IMR-90 (cell line): ENCODE measurements at regions of chr5 and their contacts with region 1.

Region 1: DNA sequence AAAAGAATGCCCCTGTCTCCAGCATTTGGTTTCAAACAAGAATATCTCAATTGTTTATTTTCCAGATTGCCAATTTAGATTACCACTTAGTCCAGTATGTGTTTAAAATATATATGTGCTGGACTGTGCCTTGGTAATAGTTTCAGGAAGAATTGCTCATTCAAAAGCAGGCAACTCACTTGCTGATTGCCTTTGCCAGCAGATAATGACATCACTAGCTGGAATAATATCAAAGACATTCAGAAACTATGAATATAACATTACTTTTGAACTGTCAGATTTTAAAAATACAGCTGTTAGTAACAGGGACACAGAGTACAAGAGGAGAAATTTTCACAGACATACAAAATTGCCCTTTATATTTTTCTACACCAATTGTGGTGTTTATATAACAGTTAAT is 96.0 kb upstream of the ITGA2 start:
- DNase-seq: peak; percentile 90
- ATAC-seq: peak; percentile 76
- H3K4me3 ChIP-seq: no peak overlapping the region
- H3K27ac ChIP-seq: no peak overlapping the region
- H3K4me1 ChIP-seq: peaks cover 9% of the 10 kb centered on the region
- H3K27me3 ChIP-seq: no peaks in the 10 kb centered on the region
- CTCF ChIP-seq: no peak
- POLR2A ChIP-seq: no peak
- RAD21 ChIP-seq: 0 out of 2 replicates have a peak, but pooled peaks have one; percentile 7

Region 2: GRCh38 chr5:52864371-52864770 is 28.7 kb before region 1 on chr5:
- CTCF ChIA-PET with region 1: no interaction called
- POLR2A ChIA-PET with region 1: no interaction called
- dilution Hi-C with region 1: no loop called
- in situ Hi-C with region 1: no loop called
- intact Hi-C with region 1: loop called (anchors 2 kb)
- DNase-seq: peak; percentile 76
- ATAC-seq: peak; percentile 40
- H3K4me3 ChIP-seq: no peak overlapping the region
- H3K27ac ChIP-seq: peak overlapping the region; percentile 100
- H3K4me1 ChIP-seq: peaks cover 7% of the 10 kb centered on the region; the same call in 1 of the 2 replicates
- H3K27me3 ChIP-seq: no peaks in the 10 kb centered on the region
- CTCF ChIP-seq: no peak
- POLR2A ChIP-seq: no peak
- RAD21 ChIP-seq: no peak